ENCODE measurements at regions of chr6 and their contacts with region 1.

Region 1: GRCh38 chr6:20534295-20535262 is at the start of gene CDKAL1:
- DNase-seq: peak; percentile 94
- H3K4me3 ChIP-seq: peak within 1 kb of the TSS; percentile 60 to 90
- H3K27ac ChIP-seq: peak within 1 kb of the TSS; percentile 53 to 86
- H3K4me1 ChIP-seq: no peaks in the 10 kb centered on the region
- H3K27me3 ChIP-seq: no peaks in the 10 kb centered on the region
- CTCF ChIP-seq: no peak
- POLR2A ChIP-seq: no peak
- total RNA-seq, gene CDKAL1: 16.1 to 18.5 TPM

Region 2: GRCh38 chr6:20092071-20092566 is 442.5 kb before region 1 on chr6:
- intact Hi-C with region 1: loop called (anchors 10 kb)
- DNase-seq: no peak
- H3K4me3 ChIP-seq: no peak overlapping the region
- H3K27ac ChIP-seq: no peak overlapping the region
- H3K4me1 ChIP-seq: no peaks in the 10 kb centered on the region
- H3K27me3 ChIP-seq: no peaks in the 10 kb centered on the region
- CTCF ChIP-seq: peak; percentile 53 to 80 (median 75)
- POLR2A ChIP-seq: no peak

Region 3: GRCh38 chr6:20291764-20292580 is 242.6 kb before region 1 on chr6:
- intact Hi-C with region 1: loop called (anchors 5 kb)
- DNase-seq: peak; percentile 93
- H3K4me3 ChIP-seq: no peak overlapping the region
- H3K27ac ChIP-seq: no peak overlapping the region
- H3K4me1 ChIP-seq: no peaks in the 10 kb centered on the region
- H3K27me3 ChIP-seq: no peaks in the 10 kb centered on the region
- CTCF ChIP-seq: peak; percentile 89 to 93 (median 90)
- POLR2A ChIP-seq: no peak

Region 4: DNA sequence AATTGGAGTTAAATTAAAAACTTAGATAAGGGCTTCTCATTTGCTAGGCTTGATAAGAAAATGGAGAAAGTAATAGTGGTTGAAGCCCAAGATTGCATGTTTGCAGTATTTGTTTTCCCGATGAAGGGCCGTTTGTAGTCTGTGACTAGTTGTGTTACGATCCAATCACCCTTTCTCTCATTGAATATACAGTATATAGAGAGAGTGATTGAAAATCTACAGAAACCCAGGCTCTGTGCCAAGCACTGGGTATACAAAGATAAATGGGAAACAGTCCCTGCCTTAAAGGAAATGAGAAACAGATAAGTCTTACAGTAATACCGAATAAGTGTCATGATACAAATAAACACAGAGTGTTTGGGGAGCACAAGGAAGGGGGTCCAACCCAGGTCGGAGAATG is 55.5 kb before region 1 on chr6:
- intact Hi-C with region 1: no loop called
- DNase-seq: no peak
- H3K4me3 ChIP-seq: no peak overlapping the region
- H3K27ac ChIP-seq: no peak overlapping the region
- H3K4me1 ChIP-seq: no peaks in the 10 kb centered on the region
- H3K27me3 ChIP-seq: no peaks in the 10 kb centered on the region
- CTCF ChIP-seq: no peak
- POLR2A ChIP-seq: no peak

Region 5: GRCh38 chr6:20661721-20662120 is 127.1 kb after region 1 on chr6:
- intact Hi-C with region 1: no loop called
- DNase-seq: no peak
- H3K4me3 ChIP-seq: no peak overlapping the region
- H3K27ac ChIP-seq: no peak overlapping the region
- H3K4me1 ChIP-seq: no peaks in the 10 kb centered on the region
- H3K27me3 ChIP-seq: no peaks in the 10 kb centered on the region
- CTCF ChIP-seq: no peak
- POLR2A ChIP-seq: no peak